CD4-positive, alpha-beta memory T cell (primary cell): ENCODE measurements at regions of chr6 and their contacts with region 1.

Region 1: GRCh38 chr6:11665604-11666326 is 112.8 kb downstream of the ADTRP start:
- DNase-seq: no peak
- H3K4me3 ChIP-seq: no peak overlapping the region
- H3K4me3 Mint-ChIP-seq: no peak overlapping the region
- H3K27ac ChIP-seq: no peak overlapping the region
- H3K27ac Mint-ChIP-seq: no peak overlapping the region
- H3K4me1 ChIP-seq: no peaks in the 10 kb centered on the region
- H3K4me1 Mint-ChIP-seq: no peaks in the 10 kb centered on the region
- H3K27me3 ChIP-seq: no peaks in the 10 kb centered on the region
- H3K27me3 Mint-ChIP-seq: peaks cover 13 to 20% of the 10 kb centered on the region in 2 donors

Region 2: DNA sequence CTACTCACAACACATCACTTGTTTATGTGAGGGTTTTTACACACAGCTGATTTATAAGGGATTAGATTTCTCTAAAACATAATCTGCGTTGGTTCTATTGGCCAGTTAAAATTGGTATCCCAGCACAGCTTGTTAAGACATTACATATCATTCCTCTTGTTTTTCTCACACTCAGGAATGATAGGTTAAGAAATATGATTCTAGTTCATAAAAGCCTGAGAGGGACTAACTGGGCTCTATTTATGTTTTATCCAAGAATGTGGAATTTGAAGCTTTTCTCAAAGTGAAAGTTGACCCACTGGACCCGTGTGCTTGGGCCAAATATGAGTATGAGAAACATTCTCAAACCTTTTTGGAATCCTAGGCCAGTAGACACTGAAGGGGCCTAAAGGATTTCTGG is 10.9 kb before region 1 on chr6:
- CTCF ChIA-PET with region 1: interaction called, 10 read pairs
- POLR2A ChIA-PET with region 1: no interaction called
- intact Hi-C with region 1: no loop called
- DNase-seq: no peak
- H3K4me3 ChIP-seq: no peak overlapping the region
- H3K4me3 Mint-ChIP-seq: no peak overlapping the region
- H3K27ac ChIP-seq: no peak overlapping the region
- H3K27ac Mint-ChIP-seq: no peak overlapping the region
- H3K4me1 ChIP-seq: no peaks in the 10 kb centered on the region
- H3K4me1 Mint-ChIP-seq: peaks cover 0 to 7% (median 2%) of the 10 kb centered on the region in 4 donors
- H3K27me3 ChIP-seq: no peaks in the 10 kb centered on the region
- H3K27me3 Mint-ChIP-seq: peaks cover 8 to 9% of the 10 kb centered on the region in 2 donors

Region 3: DNA sequence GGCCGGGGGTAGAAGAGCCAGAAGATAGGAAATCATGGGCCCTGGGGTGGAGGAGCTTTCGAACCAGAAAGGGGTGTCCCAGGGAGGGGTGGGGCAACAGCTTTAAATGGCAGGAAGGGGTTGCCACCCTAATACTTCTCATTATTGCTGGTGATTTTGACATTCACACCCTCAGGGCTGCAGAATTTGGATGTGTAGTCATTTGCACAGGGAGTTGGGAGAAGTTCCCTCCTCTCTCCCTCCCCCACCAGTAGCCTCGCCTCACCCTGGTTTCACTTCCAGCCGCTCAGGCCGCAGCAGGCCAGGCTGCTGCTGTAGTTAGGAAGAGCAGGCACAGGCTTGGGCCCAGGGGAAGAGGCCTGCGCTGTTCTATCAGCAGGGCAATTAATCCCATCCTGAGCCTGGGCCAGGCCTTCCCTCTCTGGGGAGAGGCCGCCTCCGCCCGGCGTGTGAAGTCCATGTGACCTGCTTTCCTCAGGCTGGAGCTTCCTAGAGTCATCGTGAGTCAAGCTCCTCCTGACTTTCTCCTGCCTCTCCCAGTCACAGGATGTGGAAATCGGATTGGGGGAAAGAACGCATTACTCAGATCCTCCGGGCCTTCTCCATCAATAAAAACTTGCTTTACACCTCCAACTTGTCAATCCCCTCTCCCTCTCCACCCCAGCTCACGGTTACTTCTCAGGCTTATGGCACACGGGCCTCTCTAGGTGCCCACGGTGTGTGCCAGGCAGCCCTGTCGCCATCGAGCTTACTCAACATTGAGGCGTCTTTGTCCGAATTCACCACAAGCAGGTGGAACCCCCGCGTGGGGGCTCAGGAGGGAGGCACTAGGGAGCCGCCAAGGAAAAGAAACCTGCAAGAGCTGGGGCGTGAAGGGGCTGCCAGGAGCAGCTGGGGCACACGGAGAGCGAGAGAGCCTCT is 105.0 kb after region 1 on chr6:
- CTCF ChIA-PET with region 1: no interaction called
- POLR2A ChIA-PET with region 1: no interaction called
- intact Hi-C with region 1: no loop called
- DNase-seq: no peak
- H3K4me3 ChIP-seq: no peak overlapping the region
- H3K4me3 Mint-ChIP-seq: no peak overlapping the region
- H3K27ac ChIP-seq: no peak overlapping the region
- H3K27ac Mint-ChIP-seq: no peak overlapping the region
- H3K4me1 ChIP-seq: no peaks in the 10 kb centered on the region
- H3K4me1 Mint-ChIP-seq: no peaks in the 10 kb centered on the region
- H3K27me3 ChIP-seq: no peaks in the 10 kb centered on the region
- H3K27me3 Mint-ChIP-seq: peaks cover 0 to 3% of the 10 kb centered on the region in 2 donors

Region 4: GRCh38 chr6:11845664-11846577 is 180.2 kb after region 1 on chr6:
- CTCF ChIA-PET with region 1: no interaction called
- POLR2A ChIA-PET with region 1: no interaction called
- intact Hi-C with region 1: no loop called
- DNase-seq: no peak
- H3K4me3 ChIP-seq: no peak overlapping the region
- H3K4me3 Mint-ChIP-seq: no peak overlapping the region
- H3K27ac ChIP-seq: no peak overlapping the region
- H3K27ac Mint-ChIP-seq: no peak overlapping the region
- H3K4me1 ChIP-seq: no peaks in the 10 kb centered on the region
- H3K4me1 Mint-ChIP-seq: peaks cover 0 to 1% (median 0%) of the 10 kb centered on the region in 4 donors
- H3K27me3 ChIP-seq: no peaks in the 10 kb centered on the region
- H3K27me3 Mint-ChIP-seq: peaks cover 2 to 3% of the 10 kb centered on the region in 2 donors